H1 (cell line): ENCODE measurements at regions of chr19 and their contacts with region 1.

Region 1: GRCh38 chr19:46529622-46530462 is 34.2 kb upstream of the PNMA8B start:
- DNase-seq: peak in 1 of 2 experiments; percentile 86
- H3K4me3 ChIP-seq: peak overlapping the region in 3 of 4 experiments; percentile 2 to 40 (median 19); a peak in 3 of 8 replicates
- H3K27ac ChIP-seq: no peak overlapping the region
- H3K4me1 ChIP-seq: peaks cover 5 to 22% (median 12%) of the 10 kb centered on the region in 4 experiments
- H3K27me3 ChIP-seq: no peaks in the 10 kb centered on the region
- CTCF ChIP-seq: peak; percentile 77 to 92 (median 90)
- EP300 ChIP-seq: no peak; a peak in 1 of 3 replicates
- POLR2A ChIP-seq: no peak
- RAD21 ChIP-seq: peak; percentile 90 to 93

Region 2: GRCh38 chr19:46513461-46514236 is 16.2 kb before region 1 on chr19:
- CTCF ChIA-PET with region 1: interaction called, 95 read pairs
- POLR2A ChIA-PET with region 1: no interaction called
- DNase-seq: peak; percentile 65 to 99
- H3K4me3 ChIP-seq: no peak overlapping the region
- H3K27ac ChIP-seq: no peak overlapping the region
- H3K4me1 ChIP-seq: no peaks in the 10 kb centered on the region
- H3K27me3 ChIP-seq: no peaks in the 10 kb centered on the region
- CTCF ChIP-seq: peak; percentile 87 to 98 (median 91)
- EP300 ChIP-seq: no peak
- POLR2A ChIP-seq: no peak
- RAD21 ChIP-seq: peak; percentile 97 to 99

Region 3: GRCh38 chr19:46542428-46543230 is 12.8 kb after region 1 on chr19:
- CTCF ChIA-PET with region 1: interaction called, 100 read pairs
- POLR2A ChIA-PET with region 1: interaction called, 11 read pairs
- DNase-seq: peak; percentile 69 to 92
- H3K4me3 ChIP-seq: no peak overlapping the region
- H3K27ac ChIP-seq: no peak overlapping the region
- H3K4me1 ChIP-seq: peaks cover 2 to 5% (median 4%) of the 10 kb centered on the region in 4 experiments; a peak in 4 of 7 replicates
- H3K27me3 ChIP-seq: no peaks in the 10 kb centered on the region
- CTCF ChIP-seq: peak; percentile 12 to 84 (median 77)
- EP300 ChIP-seq: no peak
- POLR2A ChIP-seq: no peak
- RAD21 ChIP-seq: peak; percentile 83

Region 4: DNA sequence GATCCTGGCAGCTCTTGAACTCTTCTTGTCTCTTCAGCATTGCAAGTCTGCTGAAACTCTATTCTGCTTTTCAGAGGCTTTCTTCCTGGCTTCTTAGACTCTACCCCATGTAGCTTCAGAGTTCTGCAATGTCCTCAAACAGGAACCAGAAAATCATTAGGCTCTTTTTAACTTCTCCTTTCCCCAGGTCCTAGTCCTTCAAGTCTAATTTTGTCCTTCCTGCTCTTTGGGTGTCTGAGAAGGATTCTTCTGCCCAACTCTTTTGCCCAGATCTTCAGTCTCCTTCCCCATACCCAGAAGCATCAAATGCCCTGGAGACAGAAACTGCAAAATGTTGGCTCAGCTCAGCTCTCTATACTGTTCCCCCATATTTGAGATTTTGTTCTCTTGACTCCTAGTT is 21.3 kb after region 1 on chr19:
- CTCF ChIA-PET with region 1: interaction called, 100 read pairs
- POLR2A ChIA-PET with region 1: no interaction called
- DNase-seq: no peak
- H3K4me3 ChIP-seq: no peak overlapping the region
- H3K27ac ChIP-seq: no peak overlapping the region
- H3K4me1 ChIP-seq: peaks cover under 1 to 3% (median 2%) of the 10 kb centered on the region in 4 experiments; a peak in 4 of 7 replicates
- H3K27me3 ChIP-seq: no peaks in the 10 kb centered on the region
- CTCF ChIP-seq: no peak
- EP300 ChIP-seq: no peak
- POLR2A ChIP-seq: no peak
- RAD21 ChIP-seq: no peak

Region 5: GRCh38 chr19:46571531-46571930 is 41.7 kb after region 1 on chr19:
- CTCF ChIA-PET with region 1: interaction called, 27 read pairs
- POLR2A ChIA-PET with region 1: interaction called, 3 read pairs
- DNase-seq: peak; percentile 44 to 66
- H3K4me3 ChIP-seq: no peak overlapping the region
- H3K27ac ChIP-seq: no peak overlapping the region
- H3K4me1 ChIP-seq: no peaks in the 10 kb centered on the region; a peak in 2 of 7 replicates
- H3K27me3 ChIP-seq: no peaks in the 10 kb centered on the region; a peak in 1 of 7 replicates
- CTCF ChIP-seq: peak; percentile 57 to 95 (median 72)
- EP300 ChIP-seq: no peak
- POLR2A ChIP-seq: no peak
- RAD21 ChIP-seq: peak in 1 of 2 experiments; percentile 44; a peak in 3 of 4 replicates

Region 6: GRCh38 chr19:46614114-46614722 is 84.4 kb after region 1 on chr19:
- CTCF ChIA-PET with region 1: interaction called, 27 read pairs
- POLR2A ChIA-PET with region 1: no interaction called
- DNase-seq: peak; percentile 58 to 97
- H3K4me3 ChIP-seq: no peak overlapping the region
- H3K27ac ChIP-seq: no peak overlapping the region
- H3K4me1 ChIP-seq: no peaks in the 10 kb centered on the region
- H3K27me3 ChIP-seq: no peaks in the 10 kb centered on the region
- CTCF ChIP-seq: peak; percentile 85 to 91 (median 91)
- EP300 ChIP-seq: no peak
- POLR2A ChIP-seq: no peak
- RAD21 ChIP-seq: peak; percentile 75 to 88